ENCODE measurements at regions of chr9 and their contacts with region 1.

Region 1: DNA sequence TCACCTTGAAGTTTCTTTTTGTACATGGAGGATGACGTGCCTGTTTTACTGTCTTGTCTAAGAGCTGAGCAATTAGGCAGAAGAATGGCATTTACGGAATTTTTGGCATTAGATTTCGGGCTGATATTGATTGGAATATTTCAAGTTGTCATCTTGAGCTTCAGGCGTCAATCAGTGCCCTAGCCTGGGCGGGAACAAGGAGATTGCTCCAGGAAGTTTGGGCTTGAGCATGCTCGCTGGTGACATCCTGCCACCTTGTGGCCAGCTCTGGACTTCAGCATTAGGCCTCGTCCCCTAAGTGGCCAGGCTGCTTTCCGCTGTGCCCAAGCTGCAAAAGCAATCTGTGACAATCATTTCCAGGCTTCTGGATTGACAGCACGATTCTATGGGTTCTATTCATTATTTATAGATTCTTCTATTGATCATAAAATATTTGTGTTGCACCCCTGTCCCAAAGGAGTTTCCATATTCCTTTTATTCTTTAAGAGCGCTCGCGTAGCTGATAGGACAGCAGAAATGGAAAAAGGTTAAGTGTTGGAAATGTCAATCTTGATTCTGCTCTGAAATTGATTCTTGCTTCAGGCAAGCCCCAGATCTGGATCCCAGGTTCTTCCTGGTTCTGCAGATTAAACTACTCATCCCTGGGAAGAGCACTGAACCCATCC is 79.3 kb downstream of the SLC28A3 start:
- DNase-seq: peak; percentile 71
- H3K4me3 Mint-ChIP-seq: no peak overlapping the region
- H3K27ac Mint-ChIP-seq: no peak overlapping the region
- H3K4me1 Mint-ChIP-seq: peaks cover 7% of the 10 kb centered on the region
- H3K27me3 Mint-ChIP-seq: peaks cover 6% of the 10 kb centered on the region

Region 2: DNA sequence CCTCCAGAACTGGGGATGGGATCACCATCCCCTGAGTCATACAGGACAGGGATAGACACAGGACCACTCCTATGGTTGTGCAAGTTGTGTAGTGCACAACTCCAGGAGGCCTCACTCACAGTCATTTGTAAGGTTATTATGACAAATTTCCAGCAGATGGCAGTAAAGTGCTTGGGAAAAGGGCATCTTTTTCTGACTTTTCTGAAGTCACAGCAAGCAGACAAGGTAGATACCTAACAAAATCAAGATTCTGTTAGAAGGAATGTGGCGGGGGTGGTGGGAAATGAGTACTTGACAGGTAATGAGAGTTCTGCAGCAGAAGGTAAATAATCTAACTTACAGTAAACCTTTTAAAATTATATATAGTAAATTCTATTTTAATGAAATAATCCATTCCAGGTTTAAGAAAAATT is 323.3 kb before region 1 on chr9:
- CTCF ChIA-PET with region 1: interaction called, 22 read pairs
- DNase-seq: peak; percentile 34
- H3K4me3 Mint-ChIP-seq: no peak overlapping the region
- H3K27ac Mint-ChIP-seq: no peak overlapping the region
- H3K4me1 Mint-ChIP-seq: no peaks in the 10 kb centered on the region
- H3K27me3 Mint-ChIP-seq: no peaks in the 10 kb centered on the region

Region 3: DNA sequence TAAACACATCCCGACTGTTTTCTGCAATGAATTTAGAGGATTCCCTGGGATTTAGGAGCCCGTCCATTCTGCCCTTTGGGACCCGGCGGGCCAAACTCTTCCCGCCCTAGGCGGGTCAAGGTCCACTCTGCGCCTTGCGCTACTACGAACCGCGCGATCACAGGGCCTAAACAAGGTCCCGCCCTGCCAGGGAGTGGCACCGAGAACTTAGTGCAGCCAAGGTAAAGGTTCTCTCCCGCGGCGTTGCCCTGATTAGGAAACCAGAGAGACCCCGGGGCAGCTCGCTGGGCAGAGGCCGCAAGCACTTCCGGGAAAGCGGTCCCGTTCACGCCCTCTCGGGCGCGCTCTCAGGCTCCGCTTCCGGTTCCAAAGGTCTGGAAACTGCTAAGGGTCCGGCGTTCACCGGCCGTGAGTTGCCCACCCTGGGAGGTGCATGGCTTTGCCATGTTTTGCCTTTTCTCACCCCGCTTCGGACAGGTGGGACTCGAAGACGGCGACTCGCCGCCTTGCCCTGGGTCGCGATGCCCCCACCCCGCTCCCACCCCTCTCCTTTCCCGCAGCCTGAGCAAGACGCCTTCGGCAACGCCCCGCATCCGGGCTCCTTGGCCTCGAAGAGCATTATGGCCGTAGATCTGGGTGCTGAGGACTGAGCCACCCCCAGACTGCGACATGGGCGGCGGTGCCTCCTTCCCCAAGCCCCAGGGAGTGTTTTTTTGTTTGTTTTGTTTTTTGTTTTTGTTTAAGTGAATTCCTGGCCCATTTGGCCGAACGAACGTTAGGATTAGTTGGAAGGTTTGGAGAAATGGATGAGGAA is 304.6 kb before region 1 on chr9:
- CTCF ChIA-PET with region 1: interaction called, 10 read pairs
- DNase-seq: peak; percentile 79
- H3K4me3 Mint-ChIP-seq: peak overlapping the region; percentile 92
- H3K27ac Mint-ChIP-seq: peak overlapping the region; percentile 90
- H3K4me1 Mint-ChIP-seq: peaks cover 27% of the 10 kb centered on the region
- H3K27me3 Mint-ChIP-seq: peaks cover 5% of the 10 kb centered on the region

Region 4: GRCh38 chr9:84187090-84187489 is 74.1 kb before region 1 on chr9:
- CTCF ChIA-PET with region 1: no interaction called
- DNase-seq: no peak
- H3K4me3 Mint-ChIP-seq: no peak overlapping the region
- H3K27ac Mint-ChIP-seq: peak overlapping the region; percentile 13
- H3K4me1 Mint-ChIP-seq: no peaks in the 10 kb centered on the region
- H3K27me3 Mint-ChIP-seq: peaks cover 13% of the 10 kb centered on the region

Region 5: DNA sequence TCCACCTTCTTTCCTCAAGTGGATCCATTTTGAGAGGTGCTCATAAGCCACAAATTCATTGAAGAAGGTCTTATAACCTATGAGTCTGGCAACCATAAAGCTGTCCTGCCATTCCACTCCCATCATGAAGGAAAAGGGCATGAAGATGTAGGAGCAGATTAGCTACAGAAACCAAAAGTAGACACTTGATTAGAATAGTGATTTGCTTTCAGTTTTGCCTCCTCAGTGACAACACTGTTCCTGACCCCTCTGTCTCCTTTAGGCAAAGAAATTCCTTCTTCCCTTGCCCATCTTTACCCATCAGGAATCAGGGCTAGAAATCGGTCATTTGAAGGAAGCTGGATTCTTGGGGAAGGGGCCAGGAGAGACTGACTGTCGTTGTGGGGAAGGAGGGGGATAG is 24.2 kb after region 1 on chr9:
- CTCF ChIA-PET with region 1: interaction called, 12 read pairs
- DNase-seq: no peak
- H3K4me3 Mint-ChIP-seq: no peak overlapping the region
- H3K27ac Mint-ChIP-seq: peak overlapping the region; percentile 25
- H3K4me1 Mint-ChIP-seq: peaks cover 15% of the 10 kb centered on the region
- H3K27me3 Mint-ChIP-seq: peaks cover 6% of the 10 kb centered on the region

Region 6: GRCh38 chr9:84296146-84296843 is 35.1 kb after region 1 on chr9:
- CTCF ChIA-PET with region 1: interaction called, 63 read pairs
- DNase-seq: peak; percentile 39
- H3K4me3 Mint-ChIP-seq: no peak overlapping the region
- H3K27ac Mint-ChIP-seq: peak overlapping the region; percentile 90
- H3K4me1 Mint-ChIP-seq: peaks cover 61% of the 10 kb centered on the region
- H3K27me3 Mint-ChIP-seq: no peaks in the 10 kb centered on the region

Region 7: DNA sequence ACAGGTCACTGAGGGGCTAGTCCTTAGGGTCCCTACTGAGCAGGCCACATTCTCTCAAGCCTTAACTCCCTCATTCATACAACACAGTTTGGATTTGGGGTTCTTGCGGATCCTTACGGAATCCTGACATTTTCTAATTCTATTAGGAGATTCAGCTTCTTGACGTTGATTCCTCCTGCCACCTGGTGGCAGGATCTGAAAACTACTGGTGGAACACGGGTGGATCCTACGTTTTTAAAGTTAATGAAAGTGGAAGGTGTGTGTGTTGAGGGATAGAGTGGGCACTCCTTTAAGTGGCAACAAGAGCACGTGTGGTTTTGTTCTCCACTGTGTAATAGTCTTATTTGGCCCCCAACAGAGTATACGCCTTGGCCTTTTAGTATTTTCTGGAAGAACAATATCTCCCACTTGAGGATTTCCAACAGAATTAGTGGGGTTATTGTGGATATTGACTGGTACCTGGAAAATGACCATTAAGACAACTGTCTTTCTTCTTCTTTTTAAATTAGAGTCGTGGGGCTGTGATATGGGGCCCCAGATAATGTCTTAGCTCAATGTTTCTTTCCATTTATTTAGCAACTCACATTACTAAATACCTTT is 54.2 kb after region 1 on chr9:
- CTCF ChIA-PET with region 1: interaction called, 43 read pairs
- DNase-seq: peak; percentile 68
- H3K4me3 Mint-ChIP-seq: no peak overlapping the region
- H3K27ac Mint-ChIP-seq: no peak overlapping the region
- H3K4me1 Mint-ChIP-seq: peaks cover 4% of the 10 kb centered on the region
- H3K27me3 Mint-ChIP-seq: no peaks in the 10 kb centered on the region

Measured in activated naive CD4-positive, alpha-beta T cell treated with anti-CD3 and anti-CD28 coated beads, Interleukin-2, amount 10 ng/mL, durations not matched to agents 7 days and 5 days (primary cell).